B cell (primary cell): ENCODE measurements at regions of chr7 and their contacts with region 1.

Region 1: DNA sequence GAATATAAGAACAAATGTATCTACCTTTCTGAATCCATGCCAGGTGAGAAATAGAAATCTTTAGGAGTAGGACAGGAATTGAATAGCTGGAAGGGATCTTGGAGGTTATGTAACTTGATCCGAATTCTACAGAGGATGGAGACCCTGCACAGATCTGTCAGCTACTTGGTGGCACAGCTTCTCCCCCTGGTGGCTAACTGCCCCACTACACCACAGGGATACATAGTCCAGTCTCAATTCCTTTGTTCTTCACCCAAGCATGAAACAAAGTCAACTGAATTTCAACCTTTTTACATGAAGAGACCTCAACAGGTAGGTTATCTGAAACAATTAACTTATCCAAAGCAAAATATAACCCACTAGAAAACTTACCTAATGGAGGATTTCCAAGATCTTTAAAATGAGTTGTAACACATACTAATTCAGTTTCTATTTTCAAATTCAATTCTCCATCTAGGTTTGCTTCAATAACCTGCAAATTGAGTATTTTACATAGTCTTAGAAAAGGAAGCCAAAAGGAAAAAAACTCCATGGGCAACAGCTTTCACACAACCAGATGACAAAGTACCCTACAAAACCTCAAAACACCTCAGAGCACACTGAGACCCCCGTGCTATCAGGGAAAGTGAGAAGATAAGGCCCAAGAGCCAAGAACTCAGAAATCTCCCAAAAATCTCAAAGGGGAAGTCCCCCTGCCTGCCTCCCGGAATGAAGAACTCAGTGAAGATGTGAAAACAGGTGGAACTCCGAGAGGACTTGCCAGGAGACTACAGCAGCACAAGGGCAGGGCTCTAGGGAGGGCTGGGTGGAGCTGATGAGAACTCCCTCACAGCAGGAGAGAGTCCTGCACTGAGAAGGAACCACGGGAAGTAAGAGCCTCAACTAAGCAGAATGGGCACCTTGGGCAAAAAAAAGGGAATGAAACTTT is 10.3 kb downstream of the HUS1 start:
- DNase-seq: peak; percentile 62
- ATAC-seq: peak; percentile 71
- H3K4me3 ChIP-seq: no peak overlapping the region
- H3K4me3 Mint-ChIP-seq: no peak overlapping the region
- H3K27ac ChIP-seq: no peak overlapping the region
- H3K27ac Mint-ChIP-seq: no peak overlapping the region
- H3K4me1 ChIP-seq: peaks cover 0 to 4% of the 10 kb centered on the region in 2 donors
- H3K4me1 Mint-ChIP-seq: peaks cover 8% of the 10 kb centered on the region
- H3K27me3 ChIP-seq: no peaks in the 10 kb centered on the region
- H3K27me3 Mint-ChIP-seq: no peaks in the 10 kb centered on the region
- CTCF ChIP-seq: peak; percentile 91

Region 2: GRCh38 chr7:47979145-47979831 is 10.2 kb after region 1 on chr7 and contains the start of gene HUS1:
- CTCF ChIA-PET with region 1: interaction called, 12 read pairs
- POLR2A ChIA-PET with region 1: no interaction called
- intact Hi-C with region 1: no loop called
- DNase-seq: peak; percentile 94
- ATAC-seq: peak; percentile 98
- H3K4me3 ChIP-seq: peak within 1 kb of the TSS; percentile 67 to 91 (median 71)
- H3K4me3 Mint-ChIP-seq: peak within 1 kb of the TSS; percentile 92
- H3K27ac ChIP-seq: peak within 1 kb of the TSS; percentile 91 to 93
- H3K27ac Mint-ChIP-seq: peak within 1 kb of the TSS; percentile 98
- H3K4me1 ChIP-seq: peaks cover 8 to 13% of the 10 kb centered on the region in 2 donors
- H3K4me1 Mint-ChIP-seq: peaks cover 22% of the 10 kb centered on the region
- H3K27me3 ChIP-seq: no peaks in the 10 kb centered on the region
- H3K27me3 Mint-ChIP-seq: no peaks in the 10 kb centered on the region
- CTCF ChIP-seq: no peak
- total RNA-seq, gene HUS1: 61.6 and 70.8 TPM in 2 replicates